Heart left ventricle (tissue), 16 donors: ENCODE measurements at regions of chr18 and their contacts with region 1.

Region 1: DNA sequence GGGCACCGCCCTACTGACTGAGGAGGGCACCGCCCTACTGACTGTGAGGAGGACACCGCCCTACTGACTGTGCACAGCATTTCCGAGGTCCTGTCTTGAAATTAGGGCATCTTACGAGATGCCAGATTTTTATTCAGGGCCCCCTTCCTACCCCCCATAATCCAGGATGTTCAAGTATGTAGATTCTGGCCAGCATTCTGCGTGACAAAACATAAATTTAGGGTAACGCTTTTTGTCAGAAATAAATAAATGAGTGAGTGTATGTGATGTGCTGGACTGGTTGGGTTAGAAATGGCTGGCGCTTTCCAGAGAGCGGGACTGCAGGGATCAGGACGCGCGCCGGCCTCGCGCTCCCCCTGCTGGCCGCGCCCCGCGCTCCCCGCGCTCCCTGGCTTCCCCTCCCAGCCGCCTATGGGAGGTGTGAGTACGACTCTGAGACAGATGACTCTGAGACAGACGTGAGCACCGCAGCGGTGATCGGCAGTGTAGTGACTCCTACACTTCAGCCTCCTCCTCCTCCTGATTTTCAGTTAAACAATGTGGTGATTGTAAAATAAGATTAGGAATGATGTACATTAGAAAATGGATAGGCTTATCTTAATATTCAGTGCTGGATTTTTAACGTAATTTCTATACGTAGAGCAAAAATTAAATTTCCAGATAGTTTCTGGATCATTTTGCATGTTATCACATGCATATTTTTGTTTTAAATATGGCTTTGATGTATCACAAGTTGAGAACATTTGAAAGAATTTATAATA is 149.2 kb upstream of the NFATC1 start:
- DNase-seq: peak; percentile 58 to 83 (median 71)
- ATAC-seq: peak; percentile 81 to 100 (median 97)
- H3K4me3 ChIP-seq: peak overlapping the region in 1 of 12 donors; percentile 11
- H3K27ac ChIP-seq: no peak overlapping the region
- H3K4me1 ChIP-seq: peaks cover 0 to 9% (median 0%) of the 10 kb centered on the region in 12 donors
- H3K27me3 ChIP-seq: no peaks in the 10 kb centered on the region
- CTCF ChIP-seq: peak; percentile 89 to 99 (median 93)
- POLR2A ChIP-seq: no peak

Region 2: GRCh38 chr18:77765468-77765867 is 1481.1 kb before region 1 on chr18:
- intact Hi-C with region 1: loop called in 1 of 10 experiments (anchors 10 kb)
- DNase-seq: no peak
- ATAC-seq: peak in 2 of 4 donors; percentile 48 to 53
- H3K4me3 ChIP-seq: no peak overlapping the region
- H3K27ac ChIP-seq: no peak overlapping the region
- H3K4me1 ChIP-seq: no peaks in the 10 kb centered on the region
- H3K27me3 ChIP-seq: peaks cover 0 to 37% (median 7%) of the 10 kb centered on the region in 9 donors
- CTCF ChIP-seq: peak in 11 of 12 donors; percentile 23 to 53 (median 42)
- POLR2A ChIP-seq: no peak

Region 3: DNA sequence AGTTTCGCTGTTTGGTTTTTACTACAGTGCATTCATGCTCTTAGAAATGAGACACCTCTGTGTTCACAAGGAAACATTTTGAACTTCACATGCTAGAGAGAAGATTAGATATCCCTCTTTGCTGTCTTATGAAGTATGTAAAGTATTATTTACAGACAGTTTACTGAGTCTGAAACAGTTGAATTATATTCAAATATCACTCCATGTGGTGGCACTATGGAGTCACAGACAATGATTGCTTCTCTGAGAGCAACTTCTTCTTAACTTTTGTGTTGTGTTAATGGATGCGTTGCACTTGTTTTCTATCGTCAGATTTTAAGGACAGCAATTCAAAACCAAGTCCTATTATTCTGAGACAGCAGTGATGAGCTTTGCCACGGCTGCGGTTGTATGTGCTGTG is 1173.3 kb before region 1 on chr18:
- intact Hi-C with region 1: loop called in 1 of 10 experiments (anchors 10 kb)
- DNase-seq: no peak
- ATAC-seq: no peak
- H3K4me3 ChIP-seq: no peak overlapping the region
- H3K27ac ChIP-seq: no peak overlapping the region
- H3K4me1 ChIP-seq: peaks cover 0 to 8% (median 0%) of the 10 kb centered on the region in 12 donors
- H3K27me3 ChIP-seq: peaks cover 0 to 32% (median 0%) of the 10 kb centered on the region in 9 donors
- CTCF ChIP-seq: peak in 6 of 12 donors; percentile 6 to 35 (median 32)
- POLR2A ChIP-seq: no peak

Region 4: GRCh38 chr18:78875268-78875997 is 371.1 kb before region 1 on chr18:
- intact Hi-C with region 1: loop called in 7 of 10 experiments (anchors 2 to 10 kb)
- DNase-seq: no peak
- ATAC-seq: peak in 2 of 4 donors; percentile 38 to 49
- H3K4me3 ChIP-seq: no peak overlapping the region
- H3K27ac ChIP-seq: no peak overlapping the region
- H3K4me1 ChIP-seq: peaks cover 0 to 10% (median 0%) of the 10 kb centered on the region in 12 donors
- H3K27me3 ChIP-seq: peaks cover 0 to 29% (median 0%) of the 10 kb centered on the region in 9 donors
- CTCF ChIP-seq: peak in 11 of 12 donors; percentile 14 to 57 (median 39)
- POLR2A ChIP-seq: no peak

Region 5: DNA sequence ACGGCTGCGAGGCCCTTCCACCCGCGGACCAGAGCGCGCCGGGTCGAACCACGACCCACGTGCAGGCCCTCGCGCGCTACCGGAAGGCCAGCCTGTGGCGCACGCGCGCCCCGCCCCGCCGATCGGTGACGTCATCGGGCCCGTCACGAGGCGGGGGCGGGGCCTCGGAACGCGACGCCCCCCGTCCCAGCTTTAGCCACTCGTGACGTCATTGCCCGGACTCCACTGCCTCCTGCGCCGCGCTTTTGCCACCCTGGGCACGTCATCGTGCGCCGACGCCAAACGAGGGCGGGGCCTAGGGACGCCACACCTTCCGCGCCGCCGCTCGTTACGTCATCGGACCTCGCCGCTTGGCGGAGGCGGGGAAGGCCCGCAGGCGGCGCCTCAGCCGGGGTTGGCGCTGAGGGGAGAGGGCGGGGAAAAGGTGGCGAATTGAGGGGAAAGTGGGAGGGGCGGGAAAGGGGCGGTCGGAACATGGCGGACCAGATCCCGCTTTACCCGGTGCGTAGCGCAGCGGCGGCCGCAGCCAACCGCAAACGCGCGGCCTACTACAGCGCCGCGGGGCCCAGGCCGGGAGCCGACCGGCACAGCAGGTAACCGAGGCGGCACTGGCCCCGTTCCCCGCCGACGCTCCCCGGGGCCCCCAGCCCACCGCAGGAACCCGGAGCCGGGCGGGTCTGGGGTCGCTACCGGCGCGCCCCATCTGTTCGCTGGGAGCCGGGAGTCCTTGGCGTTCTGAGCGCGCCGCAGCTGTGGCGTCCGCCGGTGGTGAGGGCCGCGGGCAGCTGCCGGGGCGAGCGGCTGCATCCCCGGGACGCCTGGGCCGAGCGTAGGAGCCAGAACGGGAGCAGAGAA is 177.4 kb before region 1 on chr18 and contains the start of gene ATP9B:
- intact Hi-C with region 1: loop called in 1 of 10 experiments (anchors 10 kb)
- DNase-seq: peak; percentile 97 to 99 (median 97)
- ATAC-seq: peak; percentile 96 to 99 (median 98)
- H3K4me3 ChIP-seq: peak within 1 kb of the TSS; percentile 66 to 100 (median 87)
- H3K27ac ChIP-seq: peak within 1 kb of the TSS; percentile 57 to 98 (median 91)
- H3K4me1 ChIP-seq: peaks cover 0 to 26% (median 17%) of the 10 kb centered on the region in 12 donors
- H3K27me3 ChIP-seq: no peaks in the 10 kb centered on the region
- CTCF ChIP-seq: peak in 6 of 12 donors; percentile 5 to 44 (median 18)
- POLR2A ChIP-seq: peak in 1 of 2 donors; percentile 47
- total RNA-seq, gene ATP9B: 12.3 to 23.9 (median 12.9) TPM

Region 6: GRCh38 chr18:79139206-79139605 is 107.3 kb before region 1 on chr18:
- intact Hi-C with region 1: no loop called
- DNase-seq: no peak
- ATAC-seq: no peak
- H3K4me3 ChIP-seq: no peak overlapping the region
- H3K27ac ChIP-seq: no peak overlapping the region
- H3K4me1 ChIP-seq: no peaks in the 10 kb centered on the region
- H3K27me3 ChIP-seq: no peaks in the 10 kb centered on the region
- CTCF ChIP-seq: no peak
- POLR2A ChIP-seq: no peak

Region 7: GRCh38 chr18:79302120-79302519 is 55.6 kb after region 1 on chr18:
- intact Hi-C with region 1: no loop called
- DNase-seq: no peak
- ATAC-seq: no peak
- H3K4me3 ChIP-seq: no peak overlapping the region
- H3K27ac ChIP-seq: no peak overlapping the region
- H3K4me1 ChIP-seq: no peaks in the 10 kb centered on the region
- H3K27me3 ChIP-seq: no peaks in the 10 kb centered on the region
- CTCF ChIP-seq: no peak
- POLR2A ChIP-seq: no peak